Transverse colon (tissue), 4 donors: ENCODE measurements at regions of chr5 and their contacts with region 1.

Region 1: GRCh38 chr5:174424219-174425053 is 299.9 kb upstream of the MSX2 start:
- DNase-seq: no peak
- H3K4me3 ChIP-seq: no peak overlapping the region
- H3K27ac ChIP-seq: no peak overlapping the region
- H3K4me1 ChIP-seq: peaks cover 0 to under 1% (median under 1%) of the 10 kb centered on the region in 4 donors
- H3K27me3 ChIP-seq: peaks cover 11% of the 10 kb centered on the region
- CTCF ChIP-seq: no peak
- EP300 ChIP-seq: no peak
- POLR2A ChIP-seq: no peak

Region 2: GRCh38 chr5:174271337-174271736 is 153.1 kb before region 1 on chr5:
- in situ Hi-C with region 1: no loop called
- intact Hi-C with region 1: no loop called
- DNase-seq: peak; percentile 49
- H3K4me3 ChIP-seq: no peak overlapping the region
- H3K27ac ChIP-seq: no peak overlapping the region
- H3K4me1 ChIP-seq: no peaks in the 10 kb centered on the region
- H3K27me3 ChIP-seq: no peaks in the 10 kb centered on the region
- CTCF ChIP-seq: no peak
- EP300 ChIP-seq: no peak
- POLR2A ChIP-seq: no peak

Region 3: GRCh38 chr5:174799121-174799520 is 374.7 kb after region 1 on chr5:
- in situ Hi-C with region 1: loop called (anchors 5 to 25 kb)
- intact Hi-C with region 1: no loop called
- DNase-seq: no peak
- H3K4me3 ChIP-seq: no peak overlapping the region
- H3K27ac ChIP-seq: no peak overlapping the region
- H3K4me1 ChIP-seq: no peaks in the 10 kb centered on the region
- H3K27me3 ChIP-seq: peaks cover 18% of the 10 kb centered on the region
- CTCF ChIP-seq: no peak
- EP300 ChIP-seq: no peak
- POLR2A ChIP-seq: no peak